Kidney (tissue), 22 donors: ENCODE measurements at regions of chr19 and their contacts with region 1.

Region 1: DNA sequence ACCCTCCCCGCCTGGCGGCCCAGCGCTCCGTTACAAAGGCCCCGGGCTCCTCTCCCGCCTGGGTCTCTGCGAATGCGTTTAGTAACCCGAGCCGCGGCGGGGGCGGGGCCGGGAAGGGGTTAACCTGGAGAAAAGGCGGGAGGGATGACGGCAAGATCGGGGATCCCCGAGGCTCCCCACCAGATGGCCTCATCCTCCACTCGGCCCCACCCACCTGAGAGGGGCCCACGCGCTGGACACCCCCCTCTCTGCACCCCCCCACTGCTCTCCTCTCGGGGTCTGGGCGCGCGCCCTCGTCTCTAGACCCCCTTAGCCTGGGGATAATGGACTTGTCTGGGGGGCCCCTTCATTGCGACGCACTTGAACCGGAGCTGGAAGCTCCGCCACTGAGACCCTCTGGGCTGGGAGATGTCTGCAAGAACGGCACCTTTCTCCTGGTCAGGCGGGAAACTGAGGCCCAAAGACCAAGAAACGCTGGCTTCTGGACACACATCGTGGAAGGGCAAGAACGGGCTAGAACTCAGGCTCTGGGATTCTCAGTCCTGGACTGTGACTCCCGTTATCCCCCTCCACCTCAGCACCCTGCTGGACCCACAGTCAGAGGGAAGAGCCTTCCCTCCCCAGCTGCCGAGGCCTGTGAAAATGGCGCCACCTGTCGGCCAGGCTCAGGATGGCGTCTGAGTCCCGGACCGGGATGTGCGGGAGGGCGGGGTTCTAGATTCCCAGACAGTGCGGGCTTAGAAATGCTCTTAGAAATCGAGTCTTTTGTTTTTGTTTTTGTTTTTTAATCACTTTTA is 2.9 kb upstream of the LTBP4 start:
- DNase-seq: peak; percentile 92 to 96 (median 95)
- H3K4me3 ChIP-seq: peak overlapping the region in 1 of 3 donors; percentile 85
- H3K27ac ChIP-seq: no peak overlapping the region
- H3K4me1 ChIP-seq: peaks cover 0 to 20% (median 6%) of the 10 kb centered on the region in 3 donors
- H3K27me3 ChIP-seq: peaks cover 2% of the 10 kb centered on the region
- CTCF ChIP-seq: peak; percentile 96

Region 2: DNA sequence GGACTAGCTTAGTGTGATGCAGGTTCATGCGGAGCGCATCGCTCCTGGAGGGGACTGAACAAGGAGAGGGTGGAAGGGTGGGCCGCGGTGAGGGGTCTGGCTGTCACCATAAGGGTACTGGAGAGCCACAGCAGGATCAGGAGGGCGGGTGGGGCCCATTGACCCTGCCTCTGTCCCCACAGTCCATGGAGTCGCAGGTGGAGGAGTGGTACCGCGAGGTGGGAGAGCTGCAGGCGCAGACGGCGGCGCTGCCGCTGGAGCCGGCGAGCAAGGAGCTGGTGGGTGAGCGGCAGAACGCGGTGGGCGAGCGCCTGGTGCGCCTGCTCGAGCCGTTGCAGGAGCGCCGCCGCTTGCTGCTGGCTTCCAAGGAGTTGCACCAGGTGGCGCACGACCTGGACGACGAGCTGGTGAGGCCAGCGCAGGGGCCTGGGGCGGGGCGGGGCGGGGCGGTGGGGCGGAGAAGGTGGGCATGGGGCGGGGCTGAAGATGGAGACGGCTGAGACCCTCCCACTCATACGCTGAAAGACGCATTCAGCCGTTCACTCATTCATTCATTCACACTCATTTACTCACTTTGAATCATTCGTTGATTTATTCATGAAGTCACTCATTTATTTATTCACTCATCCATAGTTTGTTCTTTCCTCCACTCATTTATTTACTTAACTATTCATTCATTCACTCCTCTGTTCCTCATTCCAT is 49.2 kb before region 1 on chr19:
- intact Hi-C with region 1: loop called (anchors 10 kb)
- DNase-seq: peak; percentile 81 to 89 (median 86)
- H3K4me3 ChIP-seq: no peak overlapping the region
- H3K27ac ChIP-seq: no peak overlapping the region
- H3K4me1 ChIP-seq: peaks cover 0 to 3% (median 0%) of the 10 kb centered on the region in 3 donors
- H3K27me3 ChIP-seq: peaks cover 6% of the 10 kb centered on the region
- CTCF ChIP-seq: peak; percentile 58